PC-3 (cell line): ENCODE measurements at regions of chr2 and their contacts with region 1.

Region 1: DNA sequence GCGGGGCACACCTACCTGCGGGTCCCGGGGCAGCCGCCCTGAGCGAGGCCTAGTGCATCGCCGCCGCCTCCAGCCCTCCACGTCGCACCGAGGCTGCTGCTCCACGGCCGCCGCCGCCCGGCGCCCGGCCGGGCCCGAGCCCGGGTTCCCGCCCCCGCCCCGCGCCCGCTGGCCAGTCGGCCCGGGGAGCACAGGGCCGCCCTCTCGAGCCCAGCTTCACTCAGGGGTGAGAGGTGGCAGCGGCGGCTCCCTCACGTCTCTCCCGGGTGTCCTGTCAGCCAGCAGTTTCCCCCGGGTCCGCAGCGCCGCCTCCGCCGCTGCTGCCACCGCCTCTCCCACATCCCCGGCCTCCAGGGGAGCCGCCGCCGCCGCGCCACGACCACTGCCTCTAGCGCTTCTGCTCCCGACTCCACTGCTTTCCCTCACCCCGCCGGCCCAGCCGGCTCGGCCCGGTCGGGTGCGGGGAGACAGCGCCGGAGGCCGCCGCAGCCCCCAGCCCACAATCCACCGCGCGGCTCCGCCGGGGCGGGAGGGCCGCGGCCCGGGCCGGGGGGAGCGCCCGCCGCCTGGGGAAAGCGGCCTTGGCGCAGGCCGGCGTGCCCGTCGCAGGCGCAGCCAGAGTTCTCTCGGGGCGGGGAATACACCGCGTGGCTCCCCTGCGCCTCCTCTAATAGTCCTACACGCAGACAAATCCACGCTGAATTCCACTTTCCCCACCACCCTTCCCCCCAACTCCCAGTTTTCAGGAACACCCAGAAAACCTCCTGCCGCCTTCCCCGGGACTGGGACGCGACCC is at the start of gene VPS54:
- DNase-seq: peak; percentile 60
- ATAC-seq: peak; percentile 75
- H3K4me3 ChIP-seq: peak within 1 kb of the TSS; percentile 91
- H3K27ac ChIP-seq: peak within 1 kb of the TSS; percentile 39
- H3K4me1 ChIP-seq: peaks cover 23% of the 10 kb centered on the region
- H3K27me3 ChIP-seq: no peaks in the 10 kb centered on the region
- CTCF ChIP-seq: no peak
- total RNA-seq, gene VPS54: 17.9 and 18.6 TPM in 2 replicates

Region 2: GRCh38 chr2:62939735-62940491 is 1079.2 kb before region 1 on chr2:
- CTCF ChIA-PET with region 1: no interaction called
- POLR2A ChIA-PET with region 1: interaction called, 10 read pairs
- intact Hi-C with region 1: no loop called
- DNase-seq: peak; percentile 24
- ATAC-seq: peak; percentile 33; the same call in 1 of the 2 replicates
- H3K4me3 ChIP-seq: no peak overlapping the region
- H3K27ac ChIP-seq: no peak overlapping the region
- H3K4me1 ChIP-seq: no peaks in the 10 kb centered on the region
- H3K27me3 ChIP-seq: no peaks in the 10 kb centered on the region
- CTCF ChIP-seq: no peak

Region 3: DNA sequence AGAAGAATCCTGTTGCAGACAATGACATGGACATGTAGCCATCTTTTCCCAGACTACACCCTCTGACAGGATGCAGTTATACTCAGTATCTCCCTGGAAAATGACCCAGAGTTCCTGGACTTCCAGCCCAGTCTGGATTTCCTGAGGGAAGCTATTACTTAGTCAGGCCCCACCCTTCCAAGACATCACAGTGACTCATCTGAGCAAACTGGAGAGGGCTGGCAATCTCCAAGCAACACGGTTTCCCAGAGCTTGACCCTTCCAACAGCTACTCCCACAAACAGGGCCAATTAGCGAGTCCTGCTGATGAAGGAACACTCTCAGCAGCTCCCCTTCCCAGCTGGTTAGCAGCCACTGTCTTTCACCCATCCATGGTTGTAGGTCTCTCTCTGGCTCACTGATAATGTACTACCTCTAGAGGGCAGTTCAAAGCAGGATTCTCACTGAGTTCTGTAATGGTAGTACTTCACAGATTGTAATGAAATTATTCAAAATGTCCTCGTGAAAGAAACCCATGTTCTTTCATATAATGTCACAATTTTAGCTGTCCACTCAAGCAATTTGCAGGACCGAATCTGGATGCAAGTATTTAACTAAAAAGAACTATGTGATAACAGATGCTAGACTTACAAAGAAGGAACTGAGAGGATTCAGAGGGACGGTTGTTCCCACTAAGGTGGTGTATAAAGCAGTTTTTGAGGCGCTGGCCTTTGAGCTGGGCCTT is 320.1 kb before region 1 on chr2:
- CTCF ChIA-PET with region 1: no interaction called
- POLR2A ChIA-PET with region 1: no interaction called
- intact Hi-C with region 1: loop called (anchors 10 kb)
- DNase-seq: peak; percentile 93
- ATAC-seq: peak; percentile 89
- H3K4me3 ChIP-seq: peak overlapping the region; percentile 34
- H3K27ac ChIP-seq: peak overlapping the region; percentile 93
- H3K4me1 ChIP-seq: peaks cover 41% of the 10 kb centered on the region
- H3K27me3 ChIP-seq: no peaks in the 10 kb centered on the region
- CTCF ChIP-seq: peak; percentile 72

Region 4: GRCh38 chr2:63983986-63984605 is 35.0 kb before region 1 on chr2:
- CTCF ChIA-PET with region 1: no interaction called
- POLR2A ChIA-PET with region 1: no interaction called
- intact Hi-C with region 1: loop called (anchors 5 kb)
- DNase-seq: peak; percentile 46
- ATAC-seq: peak; percentile 42
- H3K4me3 ChIP-seq: no peak overlapping the region
- H3K27ac ChIP-seq: no peak overlapping the region
- H3K4me1 ChIP-seq: peaks cover 35% of the 10 kb centered on the region
- H3K27me3 ChIP-seq: no peaks in the 10 kb centered on the region
- CTCF ChIP-seq: no peak

Region 5: GRCh38 chr2:64052468-64053241 is 33.5 kb after region 1 on chr2:
- CTCF ChIA-PET with region 1: interaction called, 10 read pairs
- POLR2A ChIA-PET with region 1: no interaction called
- intact Hi-C with region 1: no loop called
- DNase-seq: peak; percentile 59
- ATAC-seq: peak; percentile 11; the same call in 1 of the 2 replicates
- H3K4me3 ChIP-seq: no peak overlapping the region
- H3K27ac ChIP-seq: no peak overlapping the region
- H3K4me1 ChIP-seq: peaks cover 4% of the 10 kb centered on the region; the same call in 1 of the 2 replicates
- H3K27me3 ChIP-seq: no peaks in the 10 kb centered on the region
- CTCF ChIP-seq: no peak